CD4-positive, alpha-beta T cell (primary cell): ENCODE measurements at regions of chr6 and their contacts with region 1.

Region 1: DNA sequence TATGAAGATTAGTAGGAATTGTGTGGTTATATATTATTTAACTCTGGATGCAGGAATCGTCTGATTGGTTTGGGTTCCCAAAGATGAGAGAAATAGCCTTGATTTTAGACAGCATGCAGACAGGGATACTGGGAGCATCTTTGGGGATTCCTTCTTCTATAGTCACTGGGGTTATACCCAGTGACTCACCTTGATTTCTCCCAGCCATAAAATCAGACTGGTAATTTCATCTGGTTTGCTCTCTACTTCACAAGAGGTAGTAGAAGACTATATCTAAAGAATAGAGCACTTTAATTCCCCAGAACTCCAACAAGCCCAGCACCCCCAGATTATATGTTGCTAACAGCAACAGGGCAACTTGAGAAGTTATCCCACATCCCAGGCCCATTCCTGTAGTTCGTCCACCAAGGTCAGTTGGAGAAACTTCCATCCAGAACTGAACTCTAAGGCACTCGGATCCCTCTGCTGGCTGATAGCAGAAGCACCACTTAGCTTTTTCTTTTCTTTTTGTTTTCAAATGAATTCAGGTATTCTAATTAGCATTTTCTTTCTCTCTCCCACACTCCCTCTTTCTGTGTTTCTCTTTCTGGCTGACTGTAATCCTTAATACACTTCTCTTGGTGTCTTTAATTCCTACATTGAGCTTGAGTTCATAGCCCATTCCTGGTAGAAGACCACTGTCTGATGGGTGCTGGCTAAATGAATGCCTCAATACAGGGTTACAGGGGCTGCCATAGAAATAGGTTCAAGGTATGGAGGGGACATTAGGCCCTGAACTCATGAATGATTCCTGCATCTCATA is 20.4 kb upstream of the EFHC1 start:
- DNase-seq: peak in 5 of 14 experiments; percentile 34 to 75 (median 57)
- ATAC-seq: peak; percentile 43
- H3K4me3 ChIP-seq: no peak overlapping the region
- H3K4me3 Mint-ChIP-seq: peak overlapping the region; percentile 54
- H3K27ac ChIP-seq: peak overlapping the region; percentile 67 to 82
- H3K27ac Mint-ChIP-seq: peak overlapping the region; percentile 97
- H3K4me1 ChIP-seq: peaks cover 70% of the 10 kb centered on the region
- H3K4me1 Mint-ChIP-seq: peaks cover 80% of the 10 kb centered on the region
- H3K27me3 ChIP-seq: no peaks in the 10 kb centered on the region
- H3K27me3 Mint-ChIP-seq: no peaks in the 10 kb centered on the region
- CTCF ChIP-seq: peak; percentile 93

Region 2: GRCh38 chr6:52162940-52163908 is 236.5 kb before region 1 on chr6:
- CTCF ChIA-PET with region 1: no interaction called
- POLR2A ChIA-PET with region 1: no interaction called
- intact Hi-C with region 1: loop called in 1 of 2 experiments (anchors 10 kb)
- DNase-seq: peak in 3 of 14 experiments; percentile 50 to 62 (median 60)
- ATAC-seq: peak; percentile 59
- H3K4me3 ChIP-seq: no peak overlapping the region
- H3K4me3 Mint-ChIP-seq: no peak overlapping the region
- H3K27ac ChIP-seq: no peak overlapping the region
- H3K27ac Mint-ChIP-seq: no peak overlapping the region
- H3K4me1 ChIP-seq: no peaks in the 10 kb centered on the region
- H3K4me1 Mint-ChIP-seq: no peaks in the 10 kb centered on the region
- H3K27me3 ChIP-seq: peaks cover 0 to 3% of the 10 kb centered on the region in 2 experiments
- H3K27me3 Mint-ChIP-seq: peaks cover 9% of the 10 kb centered on the region
- CTCF ChIP-seq: peak; percentile 58

Region 3: GRCh38 chr6:52243282-52243893 is 156.3 kb before region 1 on chr6:
- CTCF ChIA-PET with region 1: no interaction called
- POLR2A ChIA-PET with region 1: no interaction called
- intact Hi-C with region 1: no loop called
- DNase-seq: no peak
- ATAC-seq: no peak
- H3K4me3 ChIP-seq: no peak overlapping the region
- H3K4me3 Mint-ChIP-seq: no peak overlapping the region
- H3K27ac ChIP-seq: no peak overlapping the region
- H3K27ac Mint-ChIP-seq: no peak overlapping the region
- H3K4me1 ChIP-seq: no peaks in the 10 kb centered on the region
- H3K4me1 Mint-ChIP-seq: peaks cover 9% of the 10 kb centered on the region
- H3K27me3 ChIP-seq: no peaks in the 10 kb centered on the region
- H3K27me3 Mint-ChIP-seq: peaks cover 4% of the 10 kb centered on the region
- CTCF ChIP-seq: no peak

Region 4: DNA sequence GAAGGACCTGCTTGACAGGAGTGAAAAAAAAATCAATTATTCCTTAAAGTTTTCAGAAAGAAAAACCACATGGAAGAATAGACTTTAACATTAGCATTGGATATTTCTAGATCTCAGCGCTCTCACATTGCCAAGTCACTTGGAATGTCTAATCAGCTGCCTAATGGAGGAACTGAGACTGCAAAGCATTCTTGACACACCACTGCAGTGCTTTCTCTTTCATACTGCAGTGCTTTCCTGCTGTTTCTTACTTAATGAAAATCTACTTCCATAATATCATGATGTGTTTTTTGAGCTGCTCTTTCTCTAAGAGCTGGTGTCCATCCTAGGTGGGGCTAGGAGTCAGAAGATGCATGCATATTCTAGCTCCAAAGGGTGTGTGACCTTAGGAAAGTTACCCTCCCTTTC is 94.7 kb before region 1 on chr6:
- CTCF ChIA-PET with region 1: interaction called, 6 read pairs
- POLR2A ChIA-PET with region 1: interaction called, 19 read pairs
- intact Hi-C with region 1: loop called in 1 of 2 experiments (anchors 5 kb)
- DNase-seq: peak in 3 of 14 experiments; percentile 45 to 52 (median 46)
- ATAC-seq: peak; percentile 25
- H3K4me3 ChIP-seq: peak overlapping the region; percentile 10
- H3K4me3 Mint-ChIP-seq: peak overlapping the region; percentile 80
- H3K27ac ChIP-seq: peak overlapping the region; percentile 64 to 89
- H3K27ac Mint-ChIP-seq: peak overlapping the region; percentile 92
- H3K4me1 ChIP-seq: peaks cover 71% of the 10 kb centered on the region
- H3K4me1 Mint-ChIP-seq: peaks cover 80% of the 10 kb centered on the region
- H3K27me3 ChIP-seq: no peaks in the 10 kb centered on the region
- H3K27me3 Mint-ChIP-seq: no peaks in the 10 kb centered on the region
- CTCF ChIP-seq: no peak

Region 5: GRCh38 chr6:52361945-52362442 is 37.7 kb before region 1 on chr6 and contains the start of gene PAQR8:
- CTCF ChIA-PET with region 1: interaction called, 23 read pairs
- POLR2A ChIA-PET with region 1: interaction called, 46 read pairs
- intact Hi-C with region 1: loop called (anchors 1 to 2 kb)
- DNase-seq: peak; percentile 67 to 93 (median 78)
- ATAC-seq: peak; percentile 84
- H3K4me3 ChIP-seq: peak within 1 kb of the TSS; percentile 80
- H3K4me3 Mint-ChIP-seq: peak within 1 kb of the TSS; percentile 98
- H3K27ac ChIP-seq: peak within 1 kb of the TSS; percentile 81 to 88
- H3K27ac Mint-ChIP-seq: peak within 1 kb of the TSS; percentile 92
- H3K4me1 ChIP-seq: peaks cover 29% of the 10 kb centered on the region
- H3K4me1 Mint-ChIP-seq: peaks cover 53% of the 10 kb centered on the region
- H3K27me3 ChIP-seq: no peaks in the 10 kb centered on the region
- H3K27me3 Mint-ChIP-seq: no peaks in the 10 kb centered on the region
- CTCF ChIP-seq: no peak
- total RNA-seq, gene PAQR8: 1.8 to 1.9 TPM

Region 6: DNA sequence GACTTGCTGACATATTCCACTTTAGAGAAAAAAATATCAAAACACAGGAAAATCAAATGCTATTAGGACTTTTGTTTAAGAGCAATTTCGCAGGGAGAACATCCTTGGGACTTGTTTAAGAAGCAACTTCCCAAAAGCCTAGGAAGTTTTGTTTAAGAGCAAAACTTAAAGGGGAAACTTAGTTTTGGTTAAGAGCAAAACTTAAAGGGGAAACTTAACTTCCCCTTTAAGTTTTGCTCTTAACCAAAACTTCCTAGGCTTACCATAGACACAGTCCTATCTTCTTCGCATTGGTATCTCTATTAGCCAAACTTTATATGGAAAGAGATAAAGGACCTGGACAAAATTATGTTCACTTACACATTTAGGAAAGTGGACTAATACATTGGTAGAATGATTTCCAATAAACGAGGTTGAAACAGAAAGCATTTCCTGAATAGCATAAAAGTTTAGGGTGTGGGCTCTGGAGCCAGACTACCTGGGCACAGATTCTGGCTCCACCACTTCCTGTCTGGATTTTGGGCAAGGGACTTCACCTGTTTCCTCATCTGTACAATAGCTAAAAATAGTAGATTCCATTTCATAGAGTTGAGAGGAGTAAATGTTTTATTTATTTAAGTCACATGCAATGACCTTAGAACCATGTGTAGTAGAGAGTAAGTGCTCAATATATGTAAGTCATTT is 22.0 kb before region 1 on chr6:
- CTCF ChIA-PET with region 1: interaction called, 9 read pairs
- POLR2A ChIA-PET with region 1: interaction called, 10 read pairs
- intact Hi-C with region 1: loop called in 1 of 2 experiments (anchors 2 kb)
- DNase-seq: peak in 5 of 14 experiments; percentile 12 to 47 (median 33)
- ATAC-seq: peak; percentile 72
- H3K4me3 ChIP-seq: no peak overlapping the region
- H3K4me3 Mint-ChIP-seq: peak overlapping the region; percentile 70
- H3K27ac ChIP-seq: no peak overlapping the region
- H3K27ac Mint-ChIP-seq: peak overlapping the region; percentile 80
- H3K4me1 ChIP-seq: peaks cover 41% of the 10 kb centered on the region
- H3K4me1 Mint-ChIP-seq: peaks cover 82% of the 10 kb centered on the region
- H3K27me3 ChIP-seq: no peaks in the 10 kb centered on the region
- H3K27me3 Mint-ChIP-seq: no peaks in the 10 kb centered on the region
- CTCF ChIP-seq: no peak

Region 7: GRCh38 chr6:52577022-52577777 is 177.5 kb after region 1 on chr6 and contains the start of gene TRAM2:
- CTCF ChIA-PET with region 1: interaction called, 4 read pairs
- POLR2A ChIA-PET with region 1: interaction called, 4 read pairs
- intact Hi-C with region 1: loop called in 1 of 2 experiments (anchors 10 kb)
- DNase-seq: peak; percentile 61 to 92 (median 75)
- ATAC-seq: peak; percentile 67
- H3K4me3 ChIP-seq: peak within 1 kb of the TSS; percentile 69
- H3K4me3 Mint-ChIP-seq: peak within 1 kb of the TSS; percentile 86
- H3K27ac ChIP-seq: peak within 1 kb of the TSS in 1 of 2 donors; percentile 60
- H3K27ac Mint-ChIP-seq: peak within 1 kb of the TSS; percentile 86
- H3K4me1 ChIP-seq: peaks cover 39% of the 10 kb centered on the region
- H3K4me1 Mint-ChIP-seq: peaks cover 56% of the 10 kb centered on the region
- H3K27me3 ChIP-seq: no peaks in the 10 kb centered on the region
- H3K27me3 Mint-ChIP-seq: no peaks in the 10 kb centered on the region
- CTCF ChIP-seq: no peak
- total RNA-seq, gene TRAM2: 7.1 to 7.6 TPM

Region 8: GRCh38 chr6:52881996-52882841 is 482.5 kb after region 1 on chr6:
- CTCF ChIA-PET with region 1: no interaction called
- POLR2A ChIA-PET with region 1: no interaction called
- intact Hi-C with region 1: loop called in 1 of 2 experiments (anchors 5 kb)
- DNase-seq: peak; percentile 42 to 82 (median 52)
- ATAC-seq: peak; percentile 99
- H3K4me3 ChIP-seq: peak overlapping the region; percentile 59
- H3K4me3 Mint-ChIP-seq: peak overlapping the region; percentile 83
- H3K27ac ChIP-seq: no peak overlapping the region
- H3K27ac Mint-ChIP-seq: no peak overlapping the region
- H3K4me1 ChIP-seq: peaks cover 6% of the 10 kb centered on the region
- H3K4me1 Mint-ChIP-seq: no peaks in the 10 kb centered on the region
- H3K27me3 ChIP-seq: no peaks in the 10 kb centered on the region
- H3K27me3 Mint-ChIP-seq: no peaks in the 10 kb centered on the region
- CTCF ChIP-seq: peak; percentile 91